ENCODE measurements at regions of chr11 and their contacts with region 1.

Region 1: GRCh38 chr11:73965076-73965860 is 14.4 kb downstream of the DNAJB13 start:
- DNase-seq: no peak
- H3K4me3 Mint-ChIP-seq: no peak overlapping the region
- H3K27ac Mint-ChIP-seq: no peak overlapping the region
- H3K4me1 Mint-ChIP-seq: peaks cover 7% of the 10 kb centered on the region
- H3K27me3 Mint-ChIP-seq: peaks cover 8% of the 10 kb centered on the region
- CTCF ChIP-seq: no peak

Region 2: GRCh38 chr11:74090701-74091100 is 125.4 kb after region 1 on chr11:
- CTCF ChIA-PET with region 1: interaction called, 3 read pairs
- POLR2A ChIA-PET with region 1: no interaction called
- intact Hi-C with region 1: loop called (anchors 2 kb)
- DNase-seq: peak; percentile 7
- H3K4me3 Mint-ChIP-seq: no peak overlapping the region
- H3K27ac Mint-ChIP-seq: no peak overlapping the region
- H3K4me1 Mint-ChIP-seq: no peaks in the 10 kb centered on the region
- H3K27me3 Mint-ChIP-seq: no peaks in the 10 kb centered on the region
- CTCF ChIP-seq: no peak